H1 (cell line): ENCODE measurements at regions of chr4 and their contacts with region 1.

Region 1: DNA sequence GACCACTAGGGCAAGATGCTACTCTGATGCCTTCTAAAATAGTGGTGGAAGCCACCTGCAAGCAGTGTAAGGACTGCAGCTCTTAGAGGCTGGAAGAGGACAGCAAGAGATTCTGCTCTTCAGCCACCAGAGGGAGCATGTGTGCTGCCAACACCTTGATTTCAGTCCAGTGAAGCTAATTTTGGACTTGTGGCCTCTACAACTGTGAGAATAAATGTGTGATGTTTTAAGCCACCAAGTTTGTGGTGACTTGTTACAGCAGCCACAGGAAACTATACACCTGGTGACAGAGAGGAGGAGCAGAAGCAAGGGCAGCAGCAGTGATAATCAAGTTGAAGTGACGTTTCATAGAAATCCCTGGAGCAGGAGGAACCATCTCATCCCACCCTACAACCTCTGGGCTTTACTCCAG is 55.9 kb downstream of the FGFBP1 start:
- DNase-seq: peak; percentile 47 to 51
- H3K4me3 ChIP-seq: no peak overlapping the region
- H3K27ac ChIP-seq: no peak overlapping the region
- H3K4me1 ChIP-seq: peaks cover 0 to 6% (median 0%) of the 10 kb centered on the region in 4 experiments; a peak in 1 of 7 replicates
- H3K27me3 ChIP-seq: no peaks in the 10 kb centered on the region
- CTCF ChIP-seq: peak; percentile 77 to 99 (median 90)
- EP300 ChIP-seq: no peak
- POLR2A ChIP-seq: no peak
- RAD21 ChIP-seq: peak; percentile 89 to 90

Region 2: DNA sequence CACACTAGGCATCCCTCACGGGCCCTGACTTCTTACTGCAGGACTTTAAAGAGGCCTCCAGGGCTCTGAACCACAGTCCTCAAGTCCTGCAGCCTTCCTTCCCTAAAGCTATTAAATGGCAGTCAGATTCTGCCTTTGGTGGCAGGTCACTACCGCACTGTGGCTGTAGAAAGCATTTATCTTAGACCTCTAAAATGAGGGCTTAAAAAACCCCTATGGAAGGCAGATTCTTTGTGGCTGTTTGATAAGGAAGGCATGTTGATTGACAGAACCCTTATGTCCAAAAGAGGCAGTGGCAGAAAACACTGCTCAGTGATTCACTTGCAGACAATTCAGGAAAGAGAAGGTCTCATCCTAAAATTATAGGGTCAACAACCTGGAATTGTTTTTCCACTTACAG is 306.7 kb before region 1 on chr4:
- CTCF ChIA-PET with region 1: no interaction called
- POLR2A ChIA-PET with region 1: no interaction called
- DNase-seq: no peak
- H3K4me3 ChIP-seq: no peak overlapping the region
- H3K27ac ChIP-seq: no peak overlapping the region
- H3K4me1 ChIP-seq: no peaks in the 10 kb centered on the region
- H3K27me3 ChIP-seq: no peaks in the 10 kb centered on the region
- CTCF ChIP-seq: no peak
- EP300 ChIP-seq: no peak
- POLR2A ChIP-seq: no peak
- RAD21 ChIP-seq: no peak

Region 3: DNA sequence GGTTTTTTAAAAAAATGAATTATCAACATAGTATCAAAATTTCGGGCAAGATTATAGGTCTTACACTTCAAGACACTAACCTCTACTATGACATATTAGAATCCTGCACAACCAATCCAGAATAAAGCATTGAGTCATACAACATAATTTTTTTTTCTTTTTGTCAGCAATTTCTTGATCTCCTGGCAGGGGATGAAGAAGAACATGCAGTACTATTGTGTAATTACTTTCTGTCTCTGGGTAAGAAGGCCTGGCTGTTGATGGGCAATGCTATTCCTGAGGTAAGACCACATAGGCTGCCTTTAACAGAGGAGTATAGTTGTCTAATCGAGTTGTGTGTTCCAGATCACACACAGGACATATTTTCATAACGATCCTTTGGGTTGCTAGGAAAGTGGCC is 295.0 kb before region 1 on chr4:
- CTCF ChIA-PET with region 1: no interaction called
- POLR2A ChIA-PET with region 1: no interaction called
- DNase-seq: no peak
- H3K4me3 ChIP-seq: no peak overlapping the region
- H3K27ac ChIP-seq: no peak overlapping the region
- H3K4me1 ChIP-seq: peaks cover 0 to 4% (median 0%) of the 10 kb centered on the region in 4 experiments; a peak in 1 of 7 replicates
- H3K27me3 ChIP-seq: no peaks in the 10 kb centered on the region
- CTCF ChIP-seq: no peak
- EP300 ChIP-seq: no peak
- POLR2A ChIP-seq: no peak
- RAD21 ChIP-seq: no peak

Region 4: DNA sequence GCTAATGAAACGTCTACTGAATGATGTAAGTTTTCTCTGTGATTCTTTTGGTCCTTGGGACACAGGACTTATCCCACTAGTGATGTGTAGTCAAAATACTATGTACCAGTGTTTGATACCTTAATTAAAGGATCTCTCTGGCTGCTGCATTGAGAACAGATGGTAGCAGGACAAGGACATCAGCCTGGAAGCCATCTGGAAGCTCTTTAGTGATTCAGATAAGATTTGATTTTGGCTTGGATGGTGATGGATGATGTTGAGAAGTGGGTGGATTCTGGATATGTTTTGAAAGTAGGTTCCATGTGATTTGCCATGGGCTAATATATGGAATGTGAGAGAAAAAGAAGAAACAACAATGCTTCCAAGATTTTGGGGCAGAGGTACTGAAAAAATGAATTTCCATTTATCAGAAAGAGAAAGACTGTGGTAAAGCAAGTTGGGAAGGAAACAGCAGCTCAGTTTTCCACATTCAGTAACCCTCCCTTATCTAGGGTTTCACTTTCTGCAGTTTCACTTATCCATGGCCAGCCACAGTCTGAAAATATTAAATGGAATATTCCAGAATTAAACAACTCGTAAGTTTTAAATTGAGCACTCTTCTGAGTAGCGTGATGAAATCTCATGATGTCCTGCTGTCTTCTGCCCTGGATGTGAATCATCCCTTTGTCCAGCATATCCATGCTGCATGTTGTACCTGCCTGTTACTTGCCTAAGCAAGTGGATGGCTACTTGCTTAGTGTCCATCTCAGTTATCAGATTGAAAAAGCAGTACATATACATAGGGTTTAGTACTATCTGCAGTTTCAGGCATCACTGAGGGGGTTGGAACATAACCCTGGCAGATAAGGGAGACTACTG is 88.9 kb before region 1 on chr4:
- CTCF ChIA-PET with region 1: no interaction called
- POLR2A ChIA-PET with region 1: no interaction called
- DNase-seq: no peak
- H3K4me3 ChIP-seq: no peak overlapping the region
- H3K27ac ChIP-seq: no peak overlapping the region
- H3K4me1 ChIP-seq: no peaks in the 10 kb centered on the region
- H3K27me3 ChIP-seq: no peaks in the 10 kb centered on the region; a peak in 1 of 7 replicates
- CTCF ChIP-seq: no peak
- EP300 ChIP-seq: no peak
- POLR2A ChIP-seq: no peak
- RAD21 ChIP-seq: no peak

Region 5: DNA sequence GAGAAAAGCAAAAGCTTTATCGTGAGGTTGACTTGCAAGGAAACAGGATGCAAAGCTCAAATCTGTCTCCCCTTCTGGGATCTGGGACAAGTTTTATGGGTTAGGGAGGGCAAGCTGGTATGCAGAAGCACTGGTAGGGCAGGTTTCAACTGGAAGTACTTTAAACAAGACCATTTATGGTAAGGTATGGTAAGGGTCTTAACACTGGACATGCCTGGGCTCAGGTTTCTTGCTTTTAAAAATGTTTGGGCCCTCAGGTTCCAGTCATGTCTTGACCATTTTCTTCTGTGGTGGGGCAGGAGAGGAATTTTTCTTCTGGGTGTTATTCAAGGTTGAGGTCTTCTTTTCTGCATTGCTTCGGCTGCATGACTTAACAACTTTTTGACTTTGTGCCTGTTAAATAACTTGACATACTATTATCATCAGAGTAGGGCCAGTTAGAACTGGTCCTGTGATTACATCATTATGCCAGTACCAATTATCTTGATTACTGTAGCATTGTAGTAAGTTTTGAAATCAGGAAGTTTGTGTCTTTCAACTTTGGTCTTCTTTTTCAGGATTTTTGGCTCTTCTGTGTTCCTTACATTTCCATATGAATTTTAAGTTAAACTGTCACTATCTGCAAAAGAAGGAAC is 70.9 kb before region 1 on chr4:
- CTCF ChIA-PET with region 1: interaction called, 150 read pairs
- POLR2A ChIA-PET with region 1: no interaction called
- DNase-seq: no peak
- H3K4me3 ChIP-seq: no peak overlapping the region
- H3K27ac ChIP-seq: no peak overlapping the region
- H3K4me1 ChIP-seq: peaks cover 0 to 4% (median 0%) of the 10 kb centered on the region in 4 experiments; a peak in 2 of 7 replicates
- H3K27me3 ChIP-seq: no peaks in the 10 kb centered on the region
- CTCF ChIP-seq: no peak
- EP300 ChIP-seq: 0 out of 3 replicates have a peak, but pooled peaks of 1 of the 2 experiments have one; percentile 29
- POLR2A ChIP-seq: no peak
- RAD21 ChIP-seq: no peak

Region 6: DNA sequence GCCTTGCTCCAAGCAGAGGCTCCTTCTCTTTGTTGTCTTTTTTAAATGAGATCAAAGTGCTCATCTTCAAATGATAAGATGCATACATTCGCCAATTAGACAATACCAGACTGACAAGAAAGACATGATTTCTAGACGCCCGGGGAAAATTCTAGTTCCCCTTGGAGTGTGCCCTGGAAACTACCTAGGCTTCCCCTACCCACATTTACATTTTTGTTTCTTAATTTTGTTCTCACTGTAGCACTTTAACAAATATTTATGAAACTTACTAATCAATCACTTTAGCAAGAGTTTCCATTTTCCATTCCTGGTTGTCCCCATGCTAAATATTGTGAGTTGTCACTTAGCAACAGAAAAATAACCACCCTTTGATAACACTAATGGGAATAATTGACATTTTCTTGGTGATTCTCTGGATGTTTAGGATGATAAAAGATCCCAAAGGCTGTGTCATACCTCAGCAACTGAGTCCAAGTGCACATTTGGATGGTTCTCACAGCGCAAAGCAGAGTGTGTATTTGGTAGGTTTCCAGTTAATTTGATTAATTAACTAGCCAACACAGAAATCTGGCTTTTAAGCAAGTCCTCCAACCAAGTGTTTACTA is 13.8 kb before region 1 on chr4:
- CTCF ChIA-PET with region 1: interaction called, 19 read pairs
- POLR2A ChIA-PET with region 1: no interaction called
- DNase-seq: no peak
- H3K4me3 ChIP-seq: no peak overlapping the region
- H3K27ac ChIP-seq: no peak overlapping the region
- H3K4me1 ChIP-seq: no peaks in the 10 kb centered on the region
- H3K27me3 ChIP-seq: no peaks in the 10 kb centered on the region
- CTCF ChIP-seq: no peak
- EP300 ChIP-seq: no peak
- POLR2A ChIP-seq: no peak
- RAD21 ChIP-seq: no peak

Region 7: DNA sequence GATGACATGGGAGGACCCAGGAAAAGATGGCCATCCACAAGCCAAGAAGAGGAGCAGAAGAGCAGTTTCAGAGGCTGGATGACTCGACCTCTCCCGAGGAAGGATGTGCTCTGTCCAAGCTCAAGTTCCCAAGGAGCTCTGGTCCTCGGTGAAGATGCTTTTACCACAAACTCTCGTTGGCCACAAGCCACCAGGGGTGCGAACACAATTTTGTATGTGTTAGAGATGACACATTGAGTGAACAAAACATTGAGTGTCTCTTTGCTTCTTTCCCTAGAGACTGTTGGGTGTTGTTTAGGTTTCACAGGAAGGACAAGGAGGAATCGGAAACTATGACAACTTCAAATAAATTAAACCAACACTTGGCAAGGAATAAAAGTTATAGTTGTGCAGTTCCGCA is 29.6 kb after region 1 on chr4:
- CTCF ChIA-PET with region 1: interaction called, 19 read pairs
- POLR2A ChIA-PET with region 1: no interaction called
- DNase-seq: no peak
- H3K4me3 ChIP-seq: no peak overlapping the region
- H3K27ac ChIP-seq: no peak overlapping the region
- H3K4me1 ChIP-seq: no peaks in the 10 kb centered on the region
- H3K27me3 ChIP-seq: no peaks in the 10 kb centered on the region; a peak in 1 of 7 replicates
- CTCF ChIP-seq: no peak
- EP300 ChIP-seq: no peak
- POLR2A ChIP-seq: no peak
- RAD21 ChIP-seq: no peak

Region 8: DNA sequence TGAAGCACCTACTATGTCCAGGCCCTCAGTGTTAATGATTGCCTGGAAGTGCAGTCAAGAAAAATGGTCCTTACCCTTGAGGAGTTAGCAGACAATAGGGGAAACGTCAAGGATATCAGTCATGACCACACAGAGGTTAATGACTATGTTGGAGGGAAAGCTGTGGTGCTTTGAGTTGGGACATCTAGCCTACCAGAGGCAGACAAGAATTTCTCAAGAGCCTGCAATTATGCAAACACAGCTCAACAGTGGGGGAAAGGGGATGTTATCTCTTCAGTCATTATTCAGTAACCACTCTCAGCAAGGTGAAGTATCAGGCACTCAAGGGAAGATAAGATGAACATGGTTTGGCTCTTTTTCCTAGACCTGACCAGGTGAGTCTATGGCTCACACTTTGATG is 62.8 kb after region 1 on chr4:
- CTCF ChIA-PET with region 1: interaction called, 52 read pairs
- POLR2A ChIA-PET with region 1: no interaction called
- DNase-seq: no peak
- H3K4me3 ChIP-seq: no peak overlapping the region
- H3K27ac ChIP-seq: no peak overlapping the region
- H3K4me1 ChIP-seq: no peaks in the 10 kb centered on the region
- H3K27me3 ChIP-seq: no peaks in the 10 kb centered on the region
- CTCF ChIP-seq: no peak
- EP300 ChIP-seq: no peak
- POLR2A ChIP-seq: no peak
- RAD21 ChIP-seq: no peak

Region 9: DNA sequence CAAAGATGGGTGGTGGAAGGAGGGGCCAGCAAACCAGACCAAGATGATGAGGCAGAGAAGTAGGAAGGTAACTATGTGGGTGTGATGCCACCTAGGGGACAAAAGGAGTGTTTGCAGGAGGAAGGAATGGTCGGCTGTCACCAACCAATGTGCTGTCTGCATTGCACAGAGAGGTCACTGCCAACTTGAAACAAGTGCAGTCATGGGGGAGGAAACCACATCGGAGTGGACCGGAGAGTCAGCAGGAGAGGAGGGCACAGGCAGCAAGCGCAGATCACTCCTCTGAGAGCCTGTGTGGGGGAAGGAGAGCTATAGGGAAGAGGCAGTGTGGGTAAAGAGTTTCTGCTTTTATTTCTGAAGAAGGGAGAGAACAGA is 118.8 kb after region 1 on chr4:
- CTCF ChIA-PET with region 1: interaction called, 17 read pairs
- POLR2A ChIA-PET with region 1: no interaction called
- DNase-seq: peak; percentile 61 to 63
- H3K4me3 ChIP-seq: no peak overlapping the region
- H3K27ac ChIP-seq: no peak overlapping the region
- H3K4me1 ChIP-seq: no peaks in the 10 kb centered on the region; a peak in 1 of 7 replicates
- H3K27me3 ChIP-seq: no peaks in the 10 kb centered on the region
- CTCF ChIP-seq: peak; percentile 78 to 98 (median 82)
- EP300 ChIP-seq: no peak
- POLR2A ChIP-seq: 0 out of 3 replicates have a peak, but pooled peaks of 1 of the 2 experiments have one; percentile 26
- RAD21 ChIP-seq: peak; percentile 84 to 89